GM12878 (cell line): ENCODE measurements at regions of chr17 and their contacts with region 1.

Region 1: GRCh38 chr17:68909066-68909465 is 46.1 kb downstream of the ABCA8 start:
- DNase-seq: peak; percentile 16
- ATAC-seq: peak; percentile 81
- H3K4me3 ChIP-seq: no peak overlapping the region
- H3K27ac ChIP-seq: no peak overlapping the region
- H3K4me1 ChIP-seq: peaks cover 3% of the 10 kb centered on the region; the same call in 1 of the 2 replicates
- H3K27me3 ChIP-seq: no peaks in the 10 kb centered on the region
- CTCF ChIP-seq: no peak
- EP300 ChIP-seq: no peak
- POLR2A ChIP-seq: no peak
- RAD21 ChIP-seq: no peak

Region 2: DNA sequence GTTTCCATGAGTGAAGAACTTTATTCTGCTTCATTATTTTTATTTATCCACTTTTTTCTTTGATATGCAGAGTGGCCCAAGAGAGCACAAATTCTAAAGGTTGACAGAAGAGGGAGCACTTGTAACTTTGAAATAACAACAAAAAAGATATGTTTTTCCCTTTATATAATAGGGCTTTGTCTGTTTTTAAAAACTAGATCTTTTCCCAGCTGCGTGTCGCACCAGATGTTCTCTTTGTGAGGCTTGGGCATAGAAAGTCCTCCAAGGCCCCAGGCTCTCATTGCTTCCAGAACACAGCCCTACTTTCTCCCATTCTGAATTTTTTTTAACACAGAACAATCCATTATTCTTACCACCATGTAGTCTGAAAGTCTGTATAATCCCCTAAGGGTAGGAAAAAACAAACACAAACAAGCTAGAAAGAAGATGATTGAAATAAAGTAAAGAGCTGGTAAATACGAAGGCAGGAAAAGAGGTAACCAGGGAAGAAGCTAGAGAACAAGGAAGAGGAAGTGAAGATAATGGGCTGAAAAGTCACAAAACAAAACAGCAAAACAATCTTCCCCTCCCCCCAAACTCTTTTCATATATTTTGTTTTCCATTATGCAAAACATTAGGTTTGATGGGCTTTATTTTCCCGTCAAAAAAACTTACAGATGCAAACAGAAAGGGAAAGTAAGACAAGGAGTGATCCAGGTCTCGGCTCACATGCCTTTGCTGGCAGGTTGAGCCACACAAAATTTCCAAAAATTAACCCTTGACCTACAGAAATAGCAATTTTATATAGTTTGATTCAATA is 114.2 kb before region 1 on chr17:
- CTCF ChIA-PET with region 1: interaction called, 29 read pairs
- POLR2A ChIA-PET with region 1: no interaction called
- RAD21 ChIA-PET with region 1: interaction called, 16 read pairs
- SMC1A ChIA-PET with region 1: interaction called, 18 read pairs
- in situ Hi-C with region 1: no loop called
- intact Hi-C with region 1: loop called (anchors 5 kb)
- DNase-seq: no peak
- ATAC-seq: peak; percentile 72
- H3K4me3 ChIP-seq: peak overlapping the region; percentile 7; the same call in 1 of the 2 replicates
- H3K27ac ChIP-seq: peak overlapping the region; percentile 38
- H3K4me1 ChIP-seq: peaks cover 4% of the 10 kb centered on the region; the same call in 1 of the 2 replicates
- H3K27me3 ChIP-seq: no peaks in the 10 kb centered on the region
- CTCF ChIP-seq: peak; percentile 10 to 41 (median 33); a peak in 3 of 6 replicates
- EP300 ChIP-seq: no peak
- POLR2A ChIP-seq: no peak
- RAD21 ChIP-seq: peak; percentile 48

Region 3: GRCh38 chr17:68868708-68869107 is 40.4 kb before region 1 on chr17:
- CTCF ChIA-PET with region 1: no interaction called
- POLR2A ChIA-PET with region 1: no interaction called
- RAD21 ChIA-PET with region 1: no interaction called
- SMC1A ChIA-PET with region 1: no interaction called
- in situ Hi-C with region 1: no loop called
- intact Hi-C with region 1: no loop called
- DNase-seq: no peak
- ATAC-seq: no peak
- H3K4me3 ChIP-seq: no peak overlapping the region
- H3K27ac ChIP-seq: no peak overlapping the region
- H3K4me1 ChIP-seq: no peaks in the 10 kb centered on the region
- H3K27me3 ChIP-seq: no peaks in the 10 kb centered on the region
- CTCF ChIP-seq: no peak
- EP300 ChIP-seq: no peak
- POLR2A ChIP-seq: no peak
- RAD21 ChIP-seq: no peak

Region 4: DNA sequence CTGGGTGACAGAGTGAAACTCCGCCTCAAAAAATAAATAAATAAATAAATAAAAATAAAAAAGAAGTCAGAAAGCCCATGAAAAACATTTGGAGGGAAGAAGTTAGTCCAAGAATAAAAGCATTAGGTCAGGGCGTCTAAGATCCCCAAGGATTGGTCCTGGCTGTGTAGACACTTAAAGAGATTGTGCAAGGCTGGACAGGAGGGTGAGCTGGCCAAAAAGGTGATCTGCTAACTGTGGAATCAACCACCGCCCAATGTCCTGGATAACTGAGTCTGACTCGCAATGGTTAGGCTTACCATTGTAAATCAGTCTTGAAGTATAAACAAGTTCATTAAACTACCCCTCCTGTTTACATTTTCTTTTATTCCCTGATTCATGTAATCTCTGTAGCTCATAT is 54.9 kb after region 1 on chr17:
- CTCF ChIA-PET with region 1: no interaction called
- POLR2A ChIA-PET with region 1: no interaction called
- RAD21 ChIA-PET with region 1: no interaction called
- SMC1A ChIA-PET with region 1: no interaction called
- in situ Hi-C with region 1: no loop called
- intact Hi-C with region 1: no loop called
- DNase-seq: no peak
- ATAC-seq: no peak
- H3K4me3 ChIP-seq: no peak overlapping the region
- H3K27ac ChIP-seq: no peak overlapping the region
- H3K4me1 ChIP-seq: no peaks in the 10 kb centered on the region
- H3K27me3 ChIP-seq: no peaks in the 10 kb centered on the region
- CTCF ChIP-seq: no peak
- EP300 ChIP-seq: no peak
- POLR2A ChIP-seq: no peak
- RAD21 ChIP-seq: no peak